Esophagus squamous epithelium (tissue), 5 donors: ENCODE measurements at regions of chr15 and their contacts with region 1.

Region 1: DNA sequence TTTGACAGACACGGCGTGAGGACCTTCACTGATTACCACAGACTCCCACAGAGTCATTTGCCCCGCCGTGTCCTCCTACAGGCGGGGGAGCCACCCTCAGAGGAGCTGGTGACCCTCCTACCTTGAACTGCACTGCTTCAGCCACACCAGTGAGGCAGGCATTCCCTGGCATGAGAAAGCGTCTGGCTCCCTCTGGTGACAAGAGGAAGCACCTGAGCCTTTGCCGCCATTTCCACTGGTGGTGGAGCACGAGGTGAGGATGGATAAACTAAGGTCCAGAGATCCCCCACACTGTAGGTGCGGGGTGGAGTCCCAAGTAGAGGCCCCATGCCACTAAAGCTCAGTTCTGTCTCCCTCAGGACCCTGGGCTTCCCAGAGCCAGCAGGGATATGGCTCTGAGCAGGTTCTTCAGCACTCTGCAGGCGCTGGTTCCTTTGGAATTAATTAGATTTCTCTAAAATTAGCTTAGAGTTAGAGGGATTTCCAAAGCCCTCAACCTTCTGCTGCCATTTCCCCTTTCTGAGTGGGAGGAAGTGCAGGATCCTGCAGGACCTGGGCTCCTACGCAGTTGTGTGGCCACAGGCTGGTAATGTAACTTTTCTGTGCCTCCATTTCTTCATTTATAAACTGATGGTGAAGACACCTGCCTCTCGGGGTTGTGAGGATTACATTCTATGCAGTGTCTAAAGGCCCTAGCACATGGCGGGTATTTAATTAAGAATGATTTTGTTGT is 224.0 kb downstream of the SLCO3A1 start:
- DNase-seq: no peak
- H3K4me3 ChIP-seq: no peak overlapping the region
- H3K27ac ChIP-seq: no peak overlapping the region
- H3K4me1 ChIP-seq: peaks cover 0 to 59% (median 23%) of the 10 kb centered on the region in 3 donors
- H3K27me3 ChIP-seq: no peaks in the 10 kb centered on the region
- CTCF ChIP-seq: peak; percentile 32 to 92 (median 78)
- POLR2A ChIP-seq: no peak

Region 2: GRCh38 chr15:91302588-91303439 is 774.7 kb before region 1 on chr15:
- intact Hi-C with region 1: loop called (anchors 5 kb)
- DNase-seq: no peak
- H3K4me3 ChIP-seq: no peak overlapping the region
- H3K27ac ChIP-seq: no peak overlapping the region
- H3K4me1 ChIP-seq: peaks cover 0 to 15% (median 3%) of the 10 kb centered on the region in 3 donors
- H3K27me3 ChIP-seq: peaks cover 0 to 39% (median 5%) of the 10 kb centered on the region in 4 donors
- CTCF ChIP-seq: peak; percentile 51 to 80 (median 71)
- POLR2A ChIP-seq: no peak

Region 3: DNA sequence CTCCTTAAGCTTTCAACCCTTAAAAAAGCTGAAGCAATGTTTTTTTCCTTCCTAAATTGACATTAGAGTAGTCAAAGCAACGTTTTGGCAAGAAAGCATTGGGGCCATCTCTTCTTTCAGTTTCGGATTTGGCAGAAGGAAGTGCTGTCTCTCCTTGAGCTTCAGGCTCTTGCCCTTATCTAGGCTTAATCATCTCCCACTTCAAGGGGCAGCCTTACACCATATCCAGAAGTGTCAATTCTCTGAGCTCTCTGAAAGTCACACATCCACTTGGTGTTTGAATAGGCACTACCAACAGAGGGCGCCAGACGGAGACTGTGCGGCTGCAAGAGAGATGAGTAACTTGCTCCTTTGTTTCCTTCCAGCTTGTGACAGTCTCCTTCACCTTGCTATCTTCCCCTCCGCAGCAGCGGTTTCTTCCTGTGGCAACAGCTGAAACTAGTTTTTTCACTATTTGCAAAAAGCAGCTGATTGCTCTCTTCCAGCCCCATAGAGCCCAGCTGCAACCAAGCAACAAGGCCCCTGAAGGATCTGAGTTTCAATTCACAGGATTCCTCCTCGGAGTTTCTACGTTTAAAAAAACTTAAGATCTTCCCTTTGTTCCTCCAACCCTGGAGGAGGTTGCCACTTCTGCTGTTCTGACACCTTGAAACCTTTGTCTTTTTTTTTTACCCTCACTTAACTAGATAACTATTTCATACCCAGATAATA is 371.0 kb before region 1 on chr15:
- intact Hi-C with region 1: loop called (anchors 5 kb)
- DNase-seq: no peak
- H3K4me3 ChIP-seq: peak overlapping the region in 1 of 4 donors; percentile 3
- H3K27ac ChIP-seq: peak overlapping the region in 2 of 4 donors; percentile 3 to 11
- H3K4me1 ChIP-seq: peaks cover 0 to 11% (median 4%) of the 10 kb centered on the region in 3 donors
- H3K27me3 ChIP-seq: no peaks in the 10 kb centered on the region
- CTCF ChIP-seq: peak; percentile 39 to 92 (median 84)
- POLR2A ChIP-seq: no peak

Region 4: GRCh38 chr15:91852741-91853510 is 224.6 kb before region 1 on chr15:
- intact Hi-C with region 1: loop called (anchors 5 kb)
- DNase-seq: peak; percentile 27
- H3K4me3 ChIP-seq: peak overlapping the region; percentile 75 to 80 (median 76)
- H3K27ac ChIP-seq: peak overlapping the region; percentile 95 to 98 (median 96)
- H3K4me1 ChIP-seq: peaks cover 34 to 65% (median 36%) of the 10 kb centered on the region in 3 donors
- H3K27me3 ChIP-seq: no peaks in the 10 kb centered on the region
- CTCF ChIP-seq: peak; percentile 39 to 95 (median 86)
- POLR2A ChIP-seq: no peak

Region 5: DNA sequence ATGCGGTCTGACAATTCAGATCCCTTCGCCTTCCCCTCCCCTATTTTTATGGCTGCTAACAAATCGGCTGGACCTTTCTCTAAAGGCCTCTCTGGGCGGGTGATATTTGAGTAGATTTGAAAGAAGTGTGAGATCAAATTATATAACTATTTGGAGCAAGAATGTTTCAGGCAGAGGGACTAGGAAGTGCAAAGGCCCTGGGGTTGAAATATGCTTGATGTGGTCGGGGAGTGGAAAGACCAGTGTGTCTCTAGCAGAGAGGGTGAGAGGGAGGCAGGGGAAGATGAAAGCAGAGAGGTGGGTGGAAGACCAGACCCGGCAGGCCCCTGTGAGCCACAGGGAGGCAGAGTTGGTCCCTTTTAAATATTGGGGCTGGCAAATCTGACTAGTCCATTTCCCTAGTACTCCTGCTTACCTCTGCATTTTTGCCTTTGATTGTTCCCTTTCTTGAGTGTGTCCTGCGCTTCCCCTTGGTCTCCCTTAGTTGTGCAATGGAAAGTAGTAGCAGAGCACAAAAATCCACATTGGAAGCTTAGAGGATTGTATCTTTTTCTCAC is 191.7 kb before region 1 on chr15:
- intact Hi-C with region 1: loop called (anchors 10 kb)
- DNase-seq: no peak
- H3K4me3 ChIP-seq: no peak overlapping the region
- H3K27ac ChIP-seq: no peak overlapping the region
- H3K4me1 ChIP-seq: peaks cover 5 to 72% (median 29%) of the 10 kb centered on the region in 3 donors
- H3K27me3 ChIP-seq: no peaks in the 10 kb centered on the region
- CTCF ChIP-seq: peak in 1 of 6 experiments; percentile 36
- POLR2A ChIP-seq: no peak

Region 6: GRCh38 chr15:91942676-91943576 is 134.6 kb before region 1 on chr15:
- intact Hi-C with region 1: no loop called
- DNase-seq: peak; percentile 8
- H3K4me3 ChIP-seq: peak overlapping the region; percentile 1 to 49 (median 12)
- H3K27ac ChIP-seq: peak overlapping the region; percentile 80 to 89 (median 86)
- H3K4me1 ChIP-seq: peaks cover 64 to 98% (median 73%) of the 10 kb centered on the region in 3 donors
- H3K27me3 ChIP-seq: no peaks in the 10 kb centered on the region
- CTCF ChIP-seq: no peak
- POLR2A ChIP-seq: peak in 1 of 4 donors; percentile 17

Region 7: DNA sequence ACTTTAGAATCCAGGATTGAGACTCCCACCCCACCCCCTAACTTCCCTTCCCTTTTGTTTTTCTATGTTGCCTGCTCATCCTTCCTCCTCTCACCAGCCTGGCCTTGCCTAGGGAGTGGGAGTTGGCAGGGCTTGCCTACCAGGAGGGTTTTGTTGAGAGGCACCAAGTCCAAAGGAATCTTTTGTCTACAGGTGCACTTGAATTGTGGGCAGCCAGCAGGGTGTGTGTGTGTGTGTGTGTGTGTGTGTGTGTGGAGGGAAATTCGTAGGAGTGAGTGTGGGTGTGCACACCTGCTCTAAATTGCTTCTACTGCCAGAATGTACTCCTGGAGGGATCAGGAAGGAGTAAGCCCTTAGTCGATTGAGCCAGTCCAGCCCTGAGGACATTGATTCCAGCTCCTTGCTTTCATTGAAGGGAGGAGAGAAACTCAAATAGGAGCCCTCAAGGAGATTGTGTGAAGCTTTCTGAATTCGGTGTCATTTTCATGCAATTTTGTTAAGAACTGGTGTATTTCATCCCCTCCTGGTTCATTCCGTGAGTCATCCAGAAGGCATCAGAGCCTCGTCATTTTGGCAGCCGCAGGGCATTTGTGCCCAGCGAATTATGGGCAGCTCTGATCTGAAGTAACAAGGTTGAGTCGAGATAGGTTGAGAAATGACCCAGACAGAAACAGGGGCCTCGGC is 111.9 kb before region 1 on chr15:
- intact Hi-C with region 1: loop called (anchors 10 kb)
- DNase-seq: no peak
- H3K4me3 ChIP-seq: no peak overlapping the region
- H3K27ac ChIP-seq: peak overlapping the region; percentile 33 to 73 (median 52)
- H3K4me1 ChIP-seq: peaks cover 10 to 94% (median 40%) of the 10 kb centered on the region in 3 donors
- H3K27me3 ChIP-seq: no peaks in the 10 kb centered on the region
- CTCF ChIP-seq: no peak
- POLR2A ChIP-seq: no peak

Region 8: DNA sequence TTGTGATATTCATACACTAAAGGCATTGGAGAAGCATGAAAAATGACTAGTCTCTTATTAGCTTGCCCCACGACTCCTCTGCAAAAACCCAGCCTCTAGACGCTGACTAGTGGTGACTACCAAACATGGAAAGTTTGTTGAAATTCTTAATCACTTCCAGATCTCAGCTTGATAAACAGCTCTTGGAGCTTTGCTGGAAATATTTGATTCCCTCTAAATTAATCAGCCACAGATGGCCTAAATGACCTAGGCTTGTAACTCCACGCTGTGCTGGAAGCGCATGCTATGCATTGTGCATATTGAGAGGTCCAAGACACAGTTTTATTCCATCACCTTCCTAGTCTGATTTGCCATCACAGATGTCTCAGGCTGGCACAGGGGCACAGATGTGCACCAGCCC is 71.5 kb after region 1 on chr15:
- intact Hi-C with region 1: no loop called
- DNase-seq: no peak
- H3K4me3 ChIP-seq: no peak overlapping the region
- H3K27ac ChIP-seq: no peak overlapping the region
- H3K4me1 ChIP-seq: peaks cover 0 to 4% (median 0%) of the 10 kb centered on the region in 3 donors
- H3K27me3 ChIP-seq: no peaks in the 10 kb centered on the region
- CTCF ChIP-seq: no peak
- POLR2A ChIP-seq: no peak

Region 9: GRCh38 chr15:92391640-92392039 is 314.1 kb after region 1 on chr15:
- intact Hi-C with region 1: no loop called
- DNase-seq: no peak
- H3K4me3 ChIP-seq: no peak overlapping the region
- H3K27ac ChIP-seq: no peak overlapping the region
- H3K4me1 ChIP-seq: peaks cover 7 to 25% (median 9%) of the 10 kb centered on the region in 3 donors
- H3K27me3 ChIP-seq: peaks cover 13 to 100% (median 25%) of the 10 kb centered on the region in 4 donors
- CTCF ChIP-seq: peak in 4 of 6 experiments; percentile 13 to 51 (median 18)
- POLR2A ChIP-seq: no peak